ENCODE measurements at regions of chr18 and their contacts with region 1.

Region 1: GRCh38 chr18:25650201-25650941 is 298.4 kb upstream of the ZNF521 start:
- DNase-seq: no peak
- ATAC-seq: no peak

Region 2: GRCh38 chr18:25604894-25605597 is 45.3 kb before region 1 on chr18:
- intact Hi-C with region 1: loop called (anchors 5 kb)
- DNase-seq: no peak
- ATAC-seq: peak; percentile 32

Region 3: DNA sequence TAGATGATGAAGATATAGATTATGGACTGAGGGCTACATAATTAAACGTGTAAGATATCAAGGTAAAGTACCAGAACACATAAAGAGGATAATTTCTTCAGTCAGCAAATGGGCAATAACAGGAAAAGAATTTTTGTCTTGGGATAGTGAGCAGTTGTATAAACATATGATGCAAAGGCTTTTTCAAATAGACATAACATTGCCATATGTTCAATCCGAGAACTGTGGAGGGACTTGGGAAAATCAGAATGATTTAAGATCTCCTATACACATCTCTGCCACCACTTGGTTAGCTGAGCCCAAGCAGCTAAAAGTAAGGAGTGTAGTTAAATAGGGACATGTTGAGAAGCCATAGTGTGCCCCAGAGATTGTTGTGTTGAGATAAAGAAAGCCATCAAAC is 10.8 kb before region 1 on chr18:
- intact Hi-C with region 1: no loop called
- DNase-seq: no peak
- ATAC-seq: no peak

Measured in sciatic nerve (tissue), 2 donors.